Gastrocnemius medialis (tissue), 4 donors: ENCODE measurements at regions of chr1 and their contacts with region 1.

Region 1: DNA sequence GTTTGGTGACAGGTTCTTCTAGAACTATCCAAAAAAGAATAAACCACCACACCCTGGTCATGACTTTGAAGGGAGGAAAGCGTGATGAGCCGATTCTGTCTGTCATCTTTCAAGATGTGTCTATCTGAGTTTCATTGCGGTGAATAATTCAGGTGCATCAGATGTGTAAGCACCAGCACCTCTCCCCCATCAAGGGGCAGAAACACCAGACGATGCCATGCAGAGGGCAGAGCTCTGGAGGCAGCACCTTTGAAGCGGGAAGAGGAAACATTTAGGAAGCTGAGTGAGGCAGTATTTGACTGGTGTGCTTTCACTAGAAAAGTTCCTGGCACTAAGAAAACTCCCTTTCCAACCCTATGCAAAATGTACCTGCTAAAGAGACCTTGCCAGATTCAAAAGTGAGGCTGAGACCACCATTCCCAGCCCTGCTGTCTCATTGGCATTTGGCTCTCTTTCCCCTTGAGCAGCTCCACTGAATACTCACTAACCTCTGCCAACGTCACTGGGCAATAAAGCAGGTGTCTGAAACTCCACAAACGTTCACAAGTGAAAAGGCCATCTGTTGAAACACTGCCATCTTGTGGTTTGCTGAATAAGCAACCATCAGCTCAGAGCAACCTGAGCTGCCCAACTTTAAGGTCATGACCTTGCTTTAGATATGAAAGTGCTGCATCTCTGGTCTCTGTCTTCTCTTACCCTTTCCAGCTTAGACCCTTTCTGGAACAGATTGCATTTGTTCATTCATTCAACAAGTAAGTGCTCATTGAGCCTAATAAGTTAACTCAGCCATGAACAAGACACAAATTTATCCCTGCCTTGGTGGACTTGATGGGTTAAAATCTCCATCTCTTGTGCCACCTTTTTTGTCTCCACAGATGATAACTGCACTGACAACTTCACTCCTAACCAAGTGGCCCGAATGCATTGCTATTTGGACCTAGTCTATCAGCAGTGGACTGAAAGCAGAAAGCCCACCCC is 228.6 kb downstream of the PAPPA2 start:
- DNase-seq: peak; percentile 62 to 66
- ATAC-seq: peak; percentile 70 to 79
- H3K4me3 ChIP-seq: no peak overlapping the region
- H3K27ac ChIP-seq: peak overlapping the region; percentile 67 to 88 (median 84)
- H3K4me1 ChIP-seq: peaks cover 15 to 38% of the 10 kb centered on the region in 2 donors
- H3K27me3 ChIP-seq: no peaks in the 10 kb centered on the region
- CTCF ChIP-seq: peak; percentile 47 to 66 (median 50)
- POLR2A ChIP-seq: no peak

Region 2: DNA sequence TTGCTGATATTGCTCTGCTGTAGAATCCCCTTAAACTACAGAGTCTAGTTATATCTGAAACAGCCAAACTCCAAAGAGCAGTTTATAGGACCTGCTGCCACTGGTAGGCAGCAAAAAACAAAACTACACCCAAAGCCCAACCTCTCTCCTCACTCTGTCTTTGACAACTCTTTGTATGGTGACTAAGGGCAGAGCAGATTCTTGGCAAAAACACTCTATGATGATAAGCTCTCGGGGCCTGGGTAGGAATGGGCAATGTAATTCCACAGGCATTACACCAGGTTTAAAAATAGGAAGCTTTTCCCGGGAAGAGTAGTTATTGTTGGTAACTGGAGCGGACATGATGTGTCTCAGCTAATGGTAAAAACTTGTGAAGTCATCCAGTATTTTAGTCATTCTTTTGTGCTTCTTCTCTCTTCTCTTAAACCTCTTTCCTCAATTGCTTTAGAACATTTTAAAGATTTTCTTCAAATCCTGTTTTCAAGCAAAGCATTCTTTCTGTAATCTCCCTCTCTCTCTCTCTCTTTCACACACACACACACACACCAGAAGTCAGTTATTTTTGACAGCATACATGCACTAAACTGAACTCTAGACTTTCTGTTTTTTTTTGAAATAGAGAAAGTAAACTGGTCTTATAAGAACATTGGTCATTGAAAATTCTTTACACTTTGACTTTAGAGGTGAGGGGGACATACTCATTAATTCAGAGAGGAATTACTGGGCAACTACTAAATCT is 35.1 kb before region 1 on chr1:
- in situ Hi-C with region 1: no loop called
- intact Hi-C with region 1: loop called (anchors 1 kb)
- DNase-seq: peak; percentile 48 to 63
- ATAC-seq: peak; percentile 99
- H3K4me3 ChIP-seq: no peak overlapping the region
- H3K27ac ChIP-seq: peak overlapping the region; percentile 58 to 67 (median 62)
- H3K4me1 ChIP-seq: peaks cover 9 to 11% of the 10 kb centered on the region in 2 donors
- H3K27me3 ChIP-seq: no peaks in the 10 kb centered on the region
- CTCF ChIP-seq: no peak
- POLR2A ChIP-seq: no peak

Region 3: GRCh38 chr1:176880954-176881595 is 189.5 kb after region 1 on chr1:
- in situ Hi-C with region 1: no loop called
- intact Hi-C with region 1: loop called (anchors 2 kb)
- DNase-seq: peak; percentile 26 to 42
- ATAC-seq: peak in 1 of 2 donors; percentile 87
- H3K4me3 ChIP-seq: no peak overlapping the region
- H3K27ac ChIP-seq: no peak overlapping the region
- H3K4me1 ChIP-seq: no peaks in the 10 kb centered on the region
- H3K27me3 ChIP-seq: no peaks in the 10 kb centered on the region
- CTCF ChIP-seq: peak; percentile 60 to 80 (median 76)
- POLR2A ChIP-seq: no peak